Adrenal gland (tissue), 19 donors: ENCODE measurements at regions of chr19 and their contacts with region 1.

Region 1: DNA sequence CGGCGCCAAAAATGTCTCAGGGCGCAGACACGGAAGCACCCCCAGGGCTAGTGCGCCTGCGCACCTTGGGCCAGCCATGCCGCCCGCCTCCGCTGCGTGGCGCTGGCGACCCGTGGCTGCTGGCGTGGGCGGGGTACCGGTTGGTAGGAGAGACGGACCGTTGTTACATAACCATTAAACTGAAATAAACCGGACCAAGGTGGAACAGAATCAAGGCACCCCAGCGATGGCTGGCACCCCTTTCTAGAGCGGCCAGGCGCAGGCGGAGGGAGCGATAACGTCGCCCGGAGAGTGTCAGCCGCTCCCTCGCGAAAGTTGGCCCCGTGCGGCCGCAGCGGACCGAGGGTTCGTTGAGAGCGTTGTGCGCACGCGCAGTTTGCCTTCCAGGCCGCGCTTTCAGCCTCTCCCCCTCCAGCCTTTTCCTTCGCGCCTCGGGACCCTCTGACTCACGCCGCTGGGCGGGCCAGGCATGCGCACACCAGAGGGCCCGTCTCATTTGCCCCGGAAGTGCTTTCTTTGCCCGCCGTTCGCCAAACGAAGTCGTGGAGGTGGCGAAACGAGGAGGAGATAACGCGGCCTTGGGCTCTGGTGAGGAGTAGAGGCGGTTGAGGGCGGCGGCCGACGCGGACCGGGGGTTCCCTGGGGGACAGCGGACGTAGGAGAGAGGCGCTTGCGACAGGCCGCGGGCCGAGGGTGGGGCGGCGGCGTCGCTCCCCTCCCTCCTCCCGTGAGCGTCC is at the starts of genes PLEKHJ1 and SF3A2:
- DNase-seq: peak; percentile 97 to 99 (median 98)
- H3K4me3 ChIP-seq: peak within 1 kb of the TSS; percentile 53 to 93 (median 74)
- H3K27ac ChIP-seq: peak within 1 kb of the TSS; percentile 94 to 100 (median 95)
- H3K4me1 ChIP-seq: peaks cover 31 to 65% of the 10 kb centered on the region in 2 donors
- H3K27me3 ChIP-seq: no peaks in the 10 kb centered on the region
- CTCF ChIP-seq: peak; percentile 83 to 100 (median 98)
- POLR2A ChIP-seq: peak; percentile 31 to 82
- total RNA-seq, gene PLEKHJ1: 58.1 to 89.5 (median 72.1) TPM
- total RNA-seq, gene SF3A2: 8.8 to 64.3 (median 27.0) TPM

Region 2: GRCh38 chr19:2151339-2152229 is 84.9 kb before region 1 on chr19 and contains the start of gene AP3D1:
- intact Hi-C with region 1: loop called (anchors 5 kb)
- DNase-seq: peak; percentile 100
- H3K4me3 ChIP-seq: peak within 1 kb of the TSS; percentile 86 to 97 (median 96)
- H3K27ac ChIP-seq: peak within 1 kb of the TSS; percentile 53 to 97 (median 83)
- H3K4me1 ChIP-seq: peaks cover 17 to 29% of the 10 kb centered on the region in 2 donors
- H3K27me3 ChIP-seq: no peaks in the 10 kb centered on the region
- CTCF ChIP-seq: no peak
- POLR2A ChIP-seq: peak in 1 of 2 donors; percentile 36
- total RNA-seq, gene AP3D1: 51.3 to 193 (median 122) TPM

Region 3: DNA sequence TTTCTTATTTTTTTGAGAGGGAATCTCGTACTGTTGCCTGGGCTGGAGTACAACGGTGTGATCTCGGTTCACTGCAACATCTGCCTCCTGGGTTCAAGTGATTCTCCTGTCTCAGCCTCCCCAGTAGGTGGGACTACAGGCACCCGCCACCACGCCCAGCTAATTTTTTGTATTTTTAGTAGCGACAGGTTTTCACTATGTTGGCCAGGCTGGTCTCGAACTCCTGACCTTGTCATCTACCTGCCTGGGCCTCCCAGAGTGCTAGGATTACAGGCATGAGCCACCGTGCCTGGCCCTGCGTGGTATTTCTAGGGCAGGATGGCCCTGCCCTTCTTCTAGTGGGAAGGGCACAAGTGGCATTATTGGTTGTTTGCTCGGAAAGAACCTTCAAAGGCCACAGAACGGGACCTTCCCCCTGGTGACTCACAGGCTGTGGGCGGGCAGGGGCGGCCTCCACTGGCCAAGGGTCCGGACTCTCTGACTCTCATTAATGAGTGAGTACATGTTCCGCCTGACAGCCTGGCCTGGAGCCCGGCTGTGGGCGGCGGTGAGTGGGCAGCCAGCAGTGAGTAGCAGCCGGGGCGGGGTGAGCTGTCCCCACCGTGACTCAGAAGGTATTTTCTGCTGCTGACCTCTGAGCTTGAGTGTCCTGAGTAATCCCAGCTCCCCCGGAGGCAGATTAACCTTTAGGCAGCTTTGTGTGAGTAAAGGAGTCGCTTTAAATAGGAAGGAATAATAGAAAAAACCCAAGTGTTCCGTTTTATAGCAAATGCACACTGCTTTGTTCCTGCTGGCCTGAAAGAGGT is 67.7 kb before region 1 on chr19:
- intact Hi-C with region 1: loop called in 1 of 2 experiments (anchors 5 kb)
- DNase-seq: peak; percentile 96 to 100 (median 99)
- H3K4me3 ChIP-seq: peak overlapping the region in 1 of 4 donors; percentile 30
- H3K27ac ChIP-seq: peak overlapping the region; percentile 78 to 96 (median 90)
- H3K4me1 ChIP-seq: peaks cover 68 to 87% of the 10 kb centered on the region in 2 donors
- H3K27me3 ChIP-seq: no peaks in the 10 kb centered on the region
- CTCF ChIP-seq: no peak
- POLR2A ChIP-seq: peak in 1 of 2 donors; percentile 87

Region 4: GRCh38 chr19:2273356-2274184 is 37.1 kb after region 1 on chr19:
- intact Hi-C with region 1: loop called (anchors 2 to 5 kb)
- DNase-seq: peak; percentile 65 to 84 (median 75)
- H3K4me3 ChIP-seq: peak overlapping the region in 1 of 4 donors; percentile 39
- H3K27ac ChIP-seq: peak overlapping the region in 4 of 5 donors; percentile 58 to 100 (median 77)
- H3K4me1 ChIP-seq: peaks cover 31 to 53% of the 10 kb centered on the region in 2 donors
- H3K27me3 ChIP-seq: no peaks in the 10 kb centered on the region
- CTCF ChIP-seq: peak; percentile 83 to 99 (median 97)
- POLR2A ChIP-seq: peak in 1 of 2 donors; percentile 13

Region 5: DNA sequence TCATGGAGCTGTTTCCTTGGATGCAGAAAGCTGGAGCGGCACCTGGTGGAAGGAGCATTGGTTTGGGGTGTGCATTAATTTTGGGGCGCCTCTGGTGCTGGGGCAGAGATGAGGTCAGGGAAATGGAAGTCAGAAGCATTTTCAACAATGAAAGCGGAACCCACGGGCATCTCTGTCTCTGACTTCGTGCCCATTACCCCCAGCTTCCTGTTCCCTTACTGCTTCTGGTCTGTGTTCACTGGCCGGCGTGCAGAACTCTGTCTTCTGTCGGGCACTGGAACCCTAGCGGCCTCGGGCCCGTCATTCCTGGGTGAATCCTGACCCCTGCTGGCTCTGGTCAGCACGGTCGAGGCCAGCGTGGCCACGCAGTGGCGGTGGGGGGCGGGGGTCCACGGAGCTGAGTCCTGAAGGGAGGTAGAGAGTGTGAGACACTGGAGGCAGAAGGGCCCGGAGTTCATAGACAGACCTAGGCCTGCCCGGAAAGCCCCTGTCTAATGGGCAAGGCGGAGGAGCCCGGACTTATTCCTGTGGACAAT is 79.4 kb after region 1 on chr19:
- intact Hi-C with region 1: loop called in 1 of 2 experiments (anchors 10 kb)
- DNase-seq: peak; percentile 64 to 82 (median 74)
- H3K4me3 ChIP-seq: no peak overlapping the region
- H3K27ac ChIP-seq: peak overlapping the region in 1 of 5 donors; percentile 14
- H3K4me1 ChIP-seq: no peaks in the 10 kb centered on the region
- H3K27me3 ChIP-seq: no peaks in the 10 kb centered on the region
- CTCF ChIP-seq: peak in 5 of 6 experiments; percentile 59 to 78 (median 68)
- POLR2A ChIP-seq: no peak